ENCODE measurements at regions of chr3 and their contacts with region 1.

Region 1: DNA sequence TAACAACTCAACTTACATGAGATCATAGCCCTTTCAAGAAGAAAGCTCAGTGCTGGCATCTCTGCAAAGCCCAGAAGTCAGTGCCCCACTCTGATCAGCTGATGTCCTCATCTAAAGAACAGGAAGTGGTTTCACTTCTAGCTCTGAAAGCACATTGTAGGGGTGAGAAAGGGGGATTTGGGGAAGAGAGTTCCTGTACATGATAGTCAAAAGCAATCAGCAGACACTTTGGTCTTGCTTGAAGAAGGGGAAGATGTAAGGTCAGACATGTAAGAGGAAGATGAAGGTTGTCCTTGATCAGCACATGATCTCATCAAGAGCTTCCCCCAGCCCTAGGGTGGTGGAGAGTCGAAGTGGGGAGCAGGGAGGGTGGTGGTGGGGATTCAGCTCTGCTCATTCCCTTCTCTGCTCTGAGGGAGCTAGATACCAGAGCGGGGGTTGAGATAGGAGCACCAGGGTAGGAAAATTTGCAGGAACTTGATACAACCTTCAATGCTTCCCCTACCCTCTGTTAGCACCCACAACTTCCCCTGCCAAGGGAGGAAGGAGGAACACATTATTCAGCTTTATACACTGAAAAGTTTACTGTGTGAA is 76.4 kb upstream of the ETV5 start:
- DNase-seq: no peak
- ATAC-seq: peak; percentile 91
- H3K4me3 Mint-ChIP-seq: peak overlapping the region; percentile 49
- H3K27ac Mint-ChIP-seq: peak overlapping the region; percentile 85
- H3K4me1 Mint-ChIP-seq: peaks cover 16% of the 10 kb centered on the region
- H3K27me3 Mint-ChIP-seq: no peaks in the 10 kb centered on the region
- CTCF ChIP-seq: no peak

Region 2: GRCh38 chr3:186152889-186153292 is 32.4 kb before region 1 on chr3:
- CTCF ChIA-PET with region 1: no interaction called
- POLR2A ChIA-PET with region 1: interaction called, 15 read pairs
- intact Hi-C with region 1: loop called (anchors 1 kb)
- DNase-seq: no peak
- ATAC-seq: peak; percentile 92
- H3K4me3 Mint-ChIP-seq: peak overlapping the region; percentile 67
- H3K27ac Mint-ChIP-seq: peak overlapping the region; percentile 87
- H3K4me1 Mint-ChIP-seq: peaks cover 30% of the 10 kb centered on the region
- H3K27me3 Mint-ChIP-seq: no peaks in the 10 kb centered on the region
- CTCF ChIP-seq: no peak

Measured in activated B cell treated with CpG ODN at 0.5 μM for 24 hours (primary cell).